Prostate gland (tissue), 2 donors: ENCODE measurements at regions of chr11 and their contacts with region 1.

Region 1: GRCh38 chr11:22539821-22540256 is 85.8 kb downstream of the FANCF start:
- DNase-seq: no peak
- H3K4me3 ChIP-seq: no peak overlapping the region
- H3K27ac ChIP-seq: no peak overlapping the region
- H3K4me1 ChIP-seq: no peaks in the 10 kb centered on the region
- H3K27me3 ChIP-seq: no peaks in the 10 kb centered on the region
- CTCF ChIP-seq: peak in 3 of 4 experiments; percentile 19 to 54 (median 51)
- POLR2A ChIP-seq: no peak

Region 2: GRCh38 chr11:22216940-22217339 is 322.9 kb before region 1 on chr11:
- intact Hi-C with region 1: no loop called
- DNase-seq: no peak
- H3K4me3 ChIP-seq: no peak overlapping the region
- H3K27ac ChIP-seq: no peak overlapping the region
- H3K4me1 ChIP-seq: no peaks in the 10 kb centered on the region
- H3K27me3 ChIP-seq: no peaks in the 10 kb centered on the region
- CTCF ChIP-seq: no peak
- POLR2A ChIP-seq: no peak

Region 3: DNA sequence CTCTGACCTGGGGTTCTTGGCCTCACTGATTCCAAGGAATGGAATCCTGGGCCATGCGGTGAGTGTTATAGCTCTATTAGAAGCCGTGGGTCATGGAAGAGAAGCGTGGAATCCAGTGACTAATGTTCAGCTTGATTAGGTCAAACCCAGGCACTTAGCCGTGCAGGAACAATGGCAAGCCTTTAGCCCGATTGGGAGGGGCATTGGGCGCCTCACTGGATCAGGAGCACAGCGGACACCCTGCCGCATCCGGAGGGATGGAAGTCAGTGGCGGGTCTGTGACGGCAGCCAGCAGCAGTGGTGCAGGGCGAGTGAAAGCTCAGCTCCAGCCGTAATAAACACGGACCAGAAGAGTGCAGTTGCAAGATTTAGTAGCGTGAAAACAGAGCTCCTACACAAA is 222.2 kb before region 1 on chr11:
- intact Hi-C with region 1: loop called (anchors 5 kb)
- DNase-seq: no peak
- H3K4me3 ChIP-seq: no peak overlapping the region
- H3K27ac ChIP-seq: no peak overlapping the region
- H3K4me1 ChIP-seq: no peaks in the 10 kb centered on the region
- H3K27me3 ChIP-seq: no peaks in the 10 kb centered on the region
- CTCF ChIP-seq: no peak
- POLR2A ChIP-seq: no peak

Region 4: GRCh38 chr11:22832315-22833015 is 292.6 kb after region 1 on chr11:
- intact Hi-C with region 1: no loop called
- DNase-seq: no peak
- H3K4me3 ChIP-seq: no peak overlapping the region
- H3K27ac ChIP-seq: no peak overlapping the region
- H3K4me1 ChIP-seq: no peaks in the 10 kb centered on the region
- H3K27me3 ChIP-seq: no peaks in the 10 kb centered on the region
- CTCF ChIP-seq: no peak
- POLR2A ChIP-seq: no peak